Heart left ventricle (tissue), 16 donors: ENCODE measurements at regions of chr9 and their contacts with region 1.

Region 1: DNA sequence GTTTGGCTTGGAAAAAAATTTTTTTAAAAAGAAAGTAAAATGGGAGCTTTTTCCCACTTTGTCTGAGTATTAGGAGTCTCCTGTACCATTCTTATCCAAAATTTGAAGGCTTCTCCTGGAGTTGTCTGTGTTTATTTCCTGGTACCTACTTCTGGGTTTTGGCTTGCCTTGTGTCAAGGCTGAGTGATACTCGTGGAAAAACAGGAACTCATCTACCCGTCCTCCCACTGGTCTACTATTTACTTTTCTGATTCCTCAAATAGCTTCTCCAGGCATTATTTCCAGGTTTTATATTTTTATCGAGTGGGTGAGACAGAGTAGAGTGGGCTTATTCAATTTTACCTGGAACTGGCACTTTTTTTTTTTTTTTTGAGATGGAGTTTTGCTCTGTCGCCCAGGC is 99.4 kb downstream of the RMI1 start:
- DNase-seq: no peak
- ATAC-seq: no peak
- H3K4me3 ChIP-seq: no peak overlapping the region
- H3K27ac ChIP-seq: no peak overlapping the region
- H3K4me1 ChIP-seq: peaks cover 0 to 12% (median 0%) of the 10 kb centered on the region in 12 donors
- H3K27me3 ChIP-seq: no peaks in the 10 kb centered on the region
- CTCF ChIP-seq: no peak
- POLR2A ChIP-seq: no peak

Region 2: DNA sequence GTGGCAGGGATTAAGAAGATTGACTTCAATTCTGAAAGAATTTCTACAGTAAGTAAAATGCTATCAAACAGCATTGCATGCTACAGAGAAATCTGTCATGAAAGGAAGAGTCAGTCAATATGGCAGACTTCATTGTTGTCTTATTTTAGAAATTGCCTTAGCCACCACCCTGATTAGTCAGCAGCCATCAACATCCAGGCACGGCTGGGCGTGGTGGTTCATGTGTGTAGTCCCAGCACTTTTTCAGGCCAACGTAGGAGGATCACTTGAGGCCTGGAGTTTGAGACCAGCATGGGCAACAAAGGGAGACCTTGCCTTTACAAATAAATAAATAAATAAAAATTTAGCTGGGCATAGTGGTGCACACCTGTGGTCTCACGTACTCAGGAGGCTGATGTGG is 52.8 kb before region 1 on chr9:
- intact Hi-C with region 1: loop called in 1 of 10 experiments (anchors 10 kb)
- DNase-seq: no peak
- ATAC-seq: no peak
- H3K4me3 ChIP-seq: no peak overlapping the region
- H3K27ac ChIP-seq: no peak overlapping the region
- H3K4me1 ChIP-seq: no peaks in the 10 kb centered on the region
- H3K27me3 ChIP-seq: no peaks in the 10 kb centered on the region
- CTCF ChIP-seq: no peak
- POLR2A ChIP-seq: no peak

Region 3: GRCh38 chr9:84129529-84130141 is 49.6 kb after region 1 on chr9:
- intact Hi-C with region 1: loop called in 1 of 10 experiments (anchors 5 kb)
- DNase-seq: no peak
- ATAC-seq: no peak
- H3K4me3 ChIP-seq: no peak overlapping the region
- H3K27ac ChIP-seq: no peak overlapping the region
- H3K4me1 ChIP-seq: no peaks in the 10 kb centered on the region
- H3K27me3 ChIP-seq: no peaks in the 10 kb centered on the region
- CTCF ChIP-seq: no peak
- POLR2A ChIP-seq: no peak